ENCODE measurements at regions of chr15 and their contacts with region 1.

Region 1: GRCh38 chr15:36501063-36501678 is 78.3 kb upstream of the CDIN1 start:
- DNase-seq: no peak
- ATAC-seq: peak; percentile 54
- H3K4me3 Mint-ChIP-seq: no peak overlapping the region
- H3K27ac Mint-ChIP-seq: no peak overlapping the region
- H3K4me1 Mint-ChIP-seq: no peaks in the 10 kb centered on the region
- H3K27me3 Mint-ChIP-seq: peaks cover 6% of the 10 kb centered on the region
- CTCF ChIP-seq: no peak

Region 2: DNA sequence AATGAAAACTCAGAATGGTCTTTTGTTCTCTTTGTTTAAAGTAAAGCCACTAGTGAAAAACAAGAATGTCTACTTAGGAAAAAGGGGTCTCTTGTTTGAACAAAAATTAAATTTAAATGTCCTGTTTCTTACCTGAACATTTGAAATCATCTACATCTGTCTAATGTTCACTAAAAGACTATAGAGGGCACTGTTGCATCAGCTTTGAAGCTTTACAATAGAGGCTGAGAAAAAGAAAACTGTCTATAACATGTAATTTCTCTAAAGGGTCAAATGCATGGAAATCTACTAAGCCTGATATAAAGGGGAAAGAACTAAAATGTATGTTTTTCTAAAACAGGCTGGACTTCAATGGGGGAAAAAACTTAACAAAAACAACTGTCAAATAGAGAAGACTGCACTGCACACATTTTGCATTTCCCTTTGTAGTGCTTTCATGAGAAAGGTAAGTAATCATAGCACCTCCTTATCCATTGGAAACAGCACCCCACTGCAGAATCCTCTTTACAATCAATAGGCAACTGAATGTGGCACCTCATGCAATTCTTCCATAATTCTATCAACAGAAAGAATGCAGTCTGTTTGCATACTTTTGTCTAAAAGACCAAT is 981.5 kb before region 1 on chr15:
- CTCF ChIA-PET with region 1: interaction called, 3 read pairs
- POLR2A ChIA-PET with region 1: no interaction called
- intact Hi-C with region 1: loop called (anchors 2 kb)
- DNase-seq: no peak
- ATAC-seq: peak; percentile 21
- H3K4me3 Mint-ChIP-seq: no peak overlapping the region
- H3K27ac Mint-ChIP-seq: no peak overlapping the region
- H3K4me1 Mint-ChIP-seq: no peaks in the 10 kb centered on the region
- H3K27me3 Mint-ChIP-seq: no peaks in the 10 kb centered on the region
- CTCF ChIP-seq: no peak

Region 3: DNA sequence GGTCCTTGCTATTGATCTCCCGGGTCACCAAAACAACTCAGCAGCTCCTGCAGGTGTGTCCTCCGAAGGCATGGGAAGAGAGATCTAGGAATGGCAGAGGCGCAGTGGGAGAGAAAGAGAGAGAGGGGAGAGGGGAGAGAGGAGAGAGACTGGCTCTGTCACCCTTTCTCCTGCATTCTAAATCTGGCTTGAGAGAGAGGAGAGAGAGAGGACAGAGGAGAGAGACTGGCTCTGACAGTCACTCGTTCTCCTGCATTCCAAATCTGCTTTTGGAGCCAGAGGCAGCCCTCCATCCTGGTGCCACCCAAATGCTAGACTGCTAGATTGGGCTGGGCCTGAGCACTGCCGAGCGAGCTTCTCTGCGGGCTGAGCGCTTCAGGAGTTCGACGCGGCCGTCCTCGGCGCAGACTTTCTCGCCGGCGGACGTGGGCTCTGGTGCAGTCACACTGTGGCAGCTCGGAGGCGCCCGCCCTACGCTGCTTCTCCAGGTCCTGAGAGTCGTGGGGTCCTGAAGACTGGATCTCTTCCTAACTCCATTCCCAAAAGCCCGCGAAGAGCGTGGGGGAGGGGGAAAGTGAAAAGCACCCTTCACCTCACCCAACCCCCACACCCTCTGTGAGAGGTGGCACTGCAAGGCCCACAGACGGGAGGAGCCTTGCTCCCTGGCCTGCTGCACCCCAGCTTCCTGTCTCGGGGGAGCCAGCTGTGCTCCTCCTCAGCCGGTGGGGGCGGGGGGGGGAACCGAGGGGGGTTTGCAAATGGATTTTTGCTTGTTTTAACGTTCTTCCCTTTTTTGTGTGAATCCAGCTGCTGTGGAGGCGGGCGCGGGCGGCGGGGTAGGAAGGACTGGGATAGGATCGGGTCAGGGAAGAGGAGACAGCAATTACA is 376.9 kb after region 1 on chr15:
- CTCF ChIA-PET with region 1: interaction called, 5 read pairs
- POLR2A ChIA-PET with region 1: no interaction called
- intact Hi-C with region 1: loop called (anchors 5 kb)
- DNase-seq: no peak
- ATAC-seq: no peak
- H3K4me3 Mint-ChIP-seq: no peak overlapping the region
- H3K27ac Mint-ChIP-seq: no peak overlapping the region
- H3K4me1 Mint-ChIP-seq: peaks cover 11% of the 10 kb centered on the region
- H3K27me3 Mint-ChIP-seq: peaks cover 65% of the 10 kb centered on the region
- CTCF ChIP-seq: no peak

Region 4: GRCh38 chr15:37134699-37135131 is 633.5 kb after region 1 on chr15:
- CTCF ChIA-PET with region 1: interaction called, 6 read pairs
- POLR2A ChIA-PET with region 1: no interaction called
- intact Hi-C with region 1: loop called (anchors 1 kb)
- DNase-seq: no peak
- ATAC-seq: no peak
- H3K4me3 Mint-ChIP-seq: no peak overlapping the region
- H3K27ac Mint-ChIP-seq: no peak overlapping the region
- H3K4me1 Mint-ChIP-seq: no peaks in the 10 kb centered on the region
- H3K27me3 Mint-ChIP-seq: peaks cover 9% of the 10 kb centered on the region
- CTCF ChIP-seq: peak; percentile 69

Region 5: GRCh38 chr15:37891766-37892368 is 1390.7 kb after region 1 on chr15:
- CTCF ChIA-PET with region 1: interaction called, 9 read pairs
- POLR2A ChIA-PET with region 1: no interaction called
- intact Hi-C with region 1: loop called (anchors 1 kb)
- DNase-seq: no peak
- ATAC-seq: no peak
- H3K4me3 Mint-ChIP-seq: no peak overlapping the region
- H3K27ac Mint-ChIP-seq: no peak overlapping the region
- H3K4me1 Mint-ChIP-seq: no peaks in the 10 kb centered on the region
- H3K27me3 Mint-ChIP-seq: peaks cover 8% of the 10 kb centered on the region
- CTCF ChIP-seq: no peak